Head of caudate nucleus (tissue), 42 donors: ENCODE measurements at regions of chr16 and their contacts with region 1.

Region 1: GRCh38 chr16:23556881-23557778 is at the starts of genes EARS2 and UBFD1:
- DNase-seq: peak; percentile 92 to 98 (median 96)

Region 2: DNA sequence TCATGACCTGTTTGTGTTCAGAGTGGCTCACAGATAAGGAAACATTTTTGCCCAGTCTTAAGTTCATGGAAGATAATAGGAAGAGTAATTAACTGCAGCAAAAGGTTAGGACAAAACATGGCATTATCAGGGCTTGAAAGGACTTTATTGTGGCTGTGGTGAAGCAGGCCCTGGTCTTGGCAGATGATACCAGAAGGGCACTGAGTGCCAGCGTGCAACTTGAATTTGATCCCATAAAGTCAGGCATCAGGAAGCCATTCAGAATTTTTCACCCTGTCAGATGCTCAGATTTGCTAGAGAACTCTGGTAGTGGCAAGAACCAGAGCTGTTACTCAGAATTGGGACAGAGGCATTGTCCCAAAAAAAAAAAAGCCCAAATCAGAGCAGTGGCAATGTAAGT is 92.9 kb before region 1 on chr16:
- intact Hi-C with region 1: loop called (anchors 5 kb)
- DNase-seq: peak in 36 of 42 donors; percentile 16 to 80 (median 47)

Region 3: DNA sequence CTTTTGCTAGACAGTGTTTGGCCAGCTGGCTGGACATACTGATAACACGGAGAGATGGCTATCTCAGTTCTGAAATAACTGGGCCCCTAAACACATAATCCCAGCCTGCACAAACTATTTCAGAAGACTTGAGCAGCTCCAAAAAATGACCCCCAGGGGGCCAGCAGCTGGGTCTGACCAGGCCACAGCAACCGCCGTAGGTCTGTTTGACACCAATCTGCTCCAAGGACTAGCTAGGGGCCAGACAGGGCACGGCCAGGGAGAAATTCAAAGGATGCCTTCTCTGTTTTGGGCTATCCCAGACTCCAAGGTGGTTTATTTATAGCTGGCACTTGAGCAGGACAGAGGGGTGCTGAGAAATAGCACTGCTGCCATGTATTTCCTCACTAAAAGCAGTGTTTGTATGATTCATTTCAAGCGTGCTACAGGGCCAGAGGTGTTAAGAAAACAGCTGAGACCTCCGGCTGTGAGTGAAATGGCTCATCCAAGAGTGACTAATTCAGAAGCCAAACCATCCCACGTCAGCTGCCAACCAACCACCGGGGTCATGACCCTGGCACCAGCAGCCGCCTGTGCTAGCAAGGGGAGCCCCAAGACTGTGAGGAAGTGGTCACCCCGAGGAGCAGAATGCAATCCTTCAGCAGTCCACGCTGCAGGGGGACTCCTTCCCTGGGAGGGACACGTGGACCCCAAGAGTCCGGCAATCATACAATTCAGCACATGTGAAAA is 52.5 kb before region 1 on chr16:
- intact Hi-C with region 1: loop called (anchors 10 kb)
- DNase-seq: peak in 17 of 42 donors; percentile 12 to 78 (median 36)

Region 4: DNA sequence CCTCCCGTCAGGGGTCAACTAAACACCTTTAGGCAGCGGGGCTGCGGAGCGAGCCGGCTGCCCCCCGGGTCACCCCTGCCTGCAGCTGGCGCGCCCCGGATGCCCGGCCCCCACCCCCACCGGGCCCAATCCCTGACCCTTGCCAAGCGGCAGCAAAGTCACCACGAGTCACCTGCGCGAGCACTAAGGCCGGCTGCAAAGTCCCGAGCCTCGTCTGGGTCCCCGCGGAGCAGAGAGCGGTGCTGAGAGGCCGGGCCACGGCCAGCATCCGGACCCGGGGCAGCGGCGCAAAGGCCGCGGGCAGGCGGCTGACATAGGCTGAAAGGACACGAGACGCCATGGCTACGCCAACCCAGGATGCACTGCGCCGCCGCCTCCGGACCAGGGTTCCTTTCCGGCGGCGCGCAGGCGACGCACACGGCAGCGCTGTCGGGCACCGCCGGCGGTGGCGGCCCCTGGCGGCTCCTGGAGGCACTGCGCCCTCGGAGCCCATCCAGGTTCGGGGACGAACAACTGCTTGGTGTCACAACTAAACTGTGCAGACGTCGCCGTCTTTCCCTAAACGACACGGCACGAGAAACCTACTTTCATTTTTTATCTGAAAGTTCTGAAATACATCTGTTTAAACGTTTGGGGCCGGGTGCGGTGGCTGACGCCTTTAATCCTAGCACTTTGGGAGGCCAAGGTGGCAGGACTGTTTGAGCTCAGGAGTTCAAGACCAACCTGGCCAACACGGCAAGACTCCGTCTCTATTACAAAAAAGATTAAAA is 39.0 kb after region 1 on chr16 and contains the start of gene NDUFAB1:
- intact Hi-C with region 1: loop called (anchors 2 kb)
- DNase-seq: peak; percentile 80 to 97 (median 94)